Lower lobe of right lung (tissue), 2 donors: ENCODE measurements at regions of chr1 and their contacts with region 1.

Region 1: GRCh38 chr1:155091071-155091709 is 12.6 kb downstream of the EFNA3 start:
- DNase-seq: peak; percentile 86
- ATAC-seq: peak; percentile 71 to 80
- H3K4me3 ChIP-seq: peak overlapping the region; percentile 14
- H3K27ac ChIP-seq: no peak overlapping the region
- H3K4me1 ChIP-seq: peaks cover 24% of the 10 kb centered on the region
- H3K27me3 ChIP-seq: no peaks in the 10 kb centered on the region
- CTCF ChIP-seq: peak; percentile 99

Region 2: DNA sequence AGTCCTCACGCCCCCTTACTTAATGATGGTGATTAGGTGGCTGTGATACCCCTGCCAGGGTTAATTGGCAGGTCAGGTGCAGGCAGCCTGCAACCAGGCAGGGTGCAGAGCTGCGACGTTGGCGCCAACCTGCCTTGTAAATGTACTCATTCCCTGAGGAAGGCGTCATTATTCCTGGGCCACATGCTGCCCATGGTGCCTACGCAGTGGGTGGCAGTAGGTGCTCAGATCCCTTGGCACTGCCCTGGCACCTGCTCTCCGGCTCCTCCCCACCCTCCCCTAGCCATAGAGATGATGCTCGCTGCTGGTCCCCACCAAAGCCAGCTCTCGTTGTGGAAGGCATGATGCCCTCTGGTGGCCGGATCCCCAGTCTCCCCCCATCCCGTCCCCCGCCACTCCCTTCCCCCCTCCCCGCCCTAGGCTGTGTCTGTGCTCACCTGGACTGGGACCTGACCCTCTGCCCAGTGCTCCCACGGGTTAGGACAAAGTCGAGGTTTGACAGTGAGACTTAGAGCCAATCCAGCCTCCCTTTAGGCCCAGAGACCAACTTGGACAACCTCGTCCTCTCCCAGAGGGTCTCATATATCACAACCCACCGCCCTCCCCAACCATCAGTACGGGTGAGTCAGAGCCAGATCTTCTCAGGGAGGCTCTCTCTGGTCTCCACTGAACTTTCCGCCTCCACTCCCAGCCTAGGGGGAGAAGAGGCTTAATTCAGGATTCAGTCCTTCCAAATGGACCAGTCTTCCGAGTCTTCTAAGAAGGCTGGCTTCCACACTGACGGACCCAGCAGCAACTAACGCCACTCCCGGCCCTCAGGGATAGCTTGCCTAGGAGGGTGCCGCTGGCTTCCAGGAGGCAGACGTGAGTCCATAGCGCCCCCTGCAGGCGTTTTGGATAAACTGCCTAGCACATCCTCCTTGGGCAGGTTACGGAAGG is 76.2 kb after region 1 on chr1:
- intact Hi-C with region 1: loop called (anchors 5 kb)
- DNase-seq: peak; percentile 92
- ATAC-seq: peak; percentile 86 to 90
- H3K4me3 ChIP-seq: peak overlapping the region; percentile 21
- H3K27ac ChIP-seq: peak overlapping the region; percentile 76
- H3K4me1 ChIP-seq: peaks cover 31% of the 10 kb centered on the region
- H3K27me3 ChIP-seq: no peaks in the 10 kb centered on the region
- CTCF ChIP-seq: peak; percentile 88